Aorta (tissue), 5 donors: ENCODE measurements at regions of chr18 and their contacts with region 1.

Region 1: DNA sequence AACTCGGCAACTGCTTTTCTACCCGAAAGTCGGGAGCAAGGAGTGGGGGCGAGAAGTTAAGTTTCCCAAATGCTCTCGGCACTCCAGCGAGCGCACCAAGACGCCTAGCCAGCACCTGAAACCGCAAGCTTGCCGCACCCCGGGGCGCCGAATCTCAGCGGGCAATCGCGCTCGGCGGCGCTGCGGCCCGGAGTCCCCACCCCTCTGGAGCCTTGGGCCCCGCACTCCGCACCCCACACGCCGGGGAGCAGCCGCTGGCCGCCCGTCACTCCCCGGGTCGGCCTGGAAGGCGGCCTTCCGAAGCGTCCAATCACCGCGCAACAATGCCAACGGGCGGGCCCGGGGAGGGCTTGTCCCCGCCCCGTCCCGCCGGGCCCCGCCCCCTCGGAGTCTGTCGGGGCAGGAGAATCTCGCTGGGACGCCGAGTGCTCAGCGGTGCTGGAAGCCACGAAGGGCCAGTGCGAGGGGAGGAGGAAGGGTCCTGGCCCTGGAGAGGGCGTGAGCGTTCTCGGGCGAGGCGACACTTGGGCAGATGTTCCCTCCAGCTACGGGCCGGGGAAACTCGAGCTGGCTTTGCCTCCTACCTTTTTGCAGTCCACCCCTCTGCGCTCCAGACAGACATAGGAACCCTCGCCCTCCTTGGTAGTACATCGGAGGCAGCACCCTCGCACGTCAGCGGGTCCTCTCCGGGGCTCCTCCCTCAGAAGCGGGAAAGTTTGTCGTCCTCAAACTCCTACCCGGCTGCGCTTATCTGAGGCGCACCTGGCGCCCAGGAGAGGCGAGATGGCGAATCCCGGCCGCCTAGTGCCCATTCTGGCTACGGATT is 1.1 kb upstream of the ZBTB7C start:
- DNase-seq: peak; percentile 95 to 98
- ATAC-seq: peak; percentile 97
- H3K4me3 ChIP-seq: peak overlapping the region; percentile 94 to 97
- H3K27ac ChIP-seq: peak overlapping the region; percentile 16 to 81
- H3K4me1 ChIP-seq: peaks cover 0 to 5% of the 10 kb centered on the region in 2 donors
- H3K27me3 ChIP-seq: no peaks in the 10 kb centered on the region

Region 2: GRCh38 chr18:48161191-48161910 is 249.0 kb before region 1 on chr18:
- intact Hi-C with region 1: loop called (anchors 5 kb)
- DNase-seq: peak; percentile 88 to 95
- ATAC-seq: peak; percentile 93
- H3K4me3 ChIP-seq: peak overlapping the region; percentile 50 to 57
- H3K27ac ChIP-seq: peak overlapping the region in 1 of 2 donors; percentile 80
- H3K4me1 ChIP-seq: no peaks in the 10 kb centered on the region
- H3K27me3 ChIP-seq: no peaks in the 10 kb centered on the region

Region 3: GRCh38 chr18:48230467-48231113 is 179.7 kb before region 1 on chr18:
- intact Hi-C with region 1: loop called in 1 of 2 experiments (anchors 10 kb)
- DNase-seq: peak; percentile 76 to 85
- ATAC-seq: peak; percentile 45
- H3K4me3 ChIP-seq: no peak overlapping the region
- H3K27ac ChIP-seq: no peak overlapping the region
- H3K4me1 ChIP-seq: no peaks in the 10 kb centered on the region
- H3K27me3 ChIP-seq: no peaks in the 10 kb centered on the region

Region 4: DNA sequence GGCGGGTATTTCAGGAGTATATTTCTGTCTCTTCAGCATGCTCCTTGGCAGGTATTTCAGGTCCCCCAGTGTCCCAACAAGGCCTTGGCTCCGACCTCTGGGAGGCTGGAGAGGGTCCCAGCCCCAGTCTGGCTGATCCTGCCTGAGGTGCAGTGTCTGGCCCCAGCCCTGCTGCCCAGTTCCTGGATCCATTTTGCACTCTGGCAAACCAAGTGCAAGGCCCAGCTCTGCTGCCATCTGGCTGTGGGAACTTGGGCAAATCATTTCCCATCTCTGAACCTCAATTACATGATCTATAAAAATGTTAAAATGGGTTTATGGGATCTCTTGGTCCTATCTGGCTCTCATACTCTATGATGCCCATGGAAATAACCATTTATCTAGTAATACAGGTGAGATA is 64.7 kb before region 1 on chr18:
- intact Hi-C with region 1: loop called (anchors 5 kb)
- DNase-seq: no peak
- ATAC-seq: no peak
- H3K4me3 ChIP-seq: no peak overlapping the region
- H3K27ac ChIP-seq: no peak overlapping the region
- H3K4me1 ChIP-seq: no peaks in the 10 kb centered on the region
- H3K27me3 ChIP-seq: no peaks in the 10 kb centered on the region

Region 5: GRCh38 chr18:48354746-48355260 is 55.5 kb before region 1 on chr18:
- intact Hi-C with region 1: loop called in 1 of 2 experiments (anchors 5 kb)
- DNase-seq: no peak
- ATAC-seq: peak; percentile 20
- H3K4me3 ChIP-seq: no peak overlapping the region
- H3K27ac ChIP-seq: peak overlapping the region in 1 of 2 donors; percentile 50
- H3K4me1 ChIP-seq: no peaks in the 10 kb centered on the region
- H3K27me3 ChIP-seq: no peaks in the 10 kb centered on the region

Region 6: DNA sequence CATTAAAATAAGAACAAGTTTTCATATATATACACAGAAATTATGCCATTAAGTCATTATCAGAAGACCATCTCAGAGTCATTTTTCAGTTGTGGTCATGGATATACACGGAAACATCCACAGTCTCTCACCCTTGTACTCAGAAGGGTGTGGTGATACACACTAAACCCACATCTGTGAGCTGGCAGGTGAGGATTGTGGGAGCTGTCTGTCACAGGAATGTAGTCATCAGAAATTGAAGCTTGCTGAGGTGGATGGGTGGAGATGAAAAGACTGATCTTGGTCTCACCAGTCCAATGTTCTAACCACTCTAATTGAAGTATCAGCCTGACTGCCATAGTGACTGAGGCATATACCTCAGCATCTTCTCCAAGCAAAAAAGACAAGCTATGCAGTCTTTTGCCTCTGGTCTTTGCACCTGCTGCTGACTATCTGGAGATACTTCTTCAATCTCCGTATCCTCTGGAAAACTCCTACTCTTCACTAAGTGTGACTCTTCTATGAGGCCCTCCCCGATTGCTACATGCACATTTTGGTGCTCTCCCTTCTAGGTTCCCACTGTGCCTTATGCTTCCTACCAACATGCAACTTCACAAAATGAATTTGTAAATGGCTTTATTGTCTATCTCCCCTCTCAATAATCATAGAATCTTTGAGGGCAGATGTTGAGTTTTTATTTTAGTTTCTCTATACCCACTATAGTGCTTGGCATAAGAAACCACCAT is 817.3 kb after region 1 on chr18:
- intact Hi-C with region 1: no loop called
- DNase-seq: no peak
- ATAC-seq: no peak
- H3K4me3 ChIP-seq: no peak overlapping the region
- H3K27ac ChIP-seq: no peak overlapping the region
- H3K4me1 ChIP-seq: peaks cover 1 to 3% of the 10 kb centered on the region in 2 donors
- H3K27me3 ChIP-seq: no peaks in the 10 kb centered on the region